Left ventricle myocardium superior (tissue), 1 donor: ENCODE measurements at regions of chr1 and their contacts with region 1.

Region 1: DNA sequence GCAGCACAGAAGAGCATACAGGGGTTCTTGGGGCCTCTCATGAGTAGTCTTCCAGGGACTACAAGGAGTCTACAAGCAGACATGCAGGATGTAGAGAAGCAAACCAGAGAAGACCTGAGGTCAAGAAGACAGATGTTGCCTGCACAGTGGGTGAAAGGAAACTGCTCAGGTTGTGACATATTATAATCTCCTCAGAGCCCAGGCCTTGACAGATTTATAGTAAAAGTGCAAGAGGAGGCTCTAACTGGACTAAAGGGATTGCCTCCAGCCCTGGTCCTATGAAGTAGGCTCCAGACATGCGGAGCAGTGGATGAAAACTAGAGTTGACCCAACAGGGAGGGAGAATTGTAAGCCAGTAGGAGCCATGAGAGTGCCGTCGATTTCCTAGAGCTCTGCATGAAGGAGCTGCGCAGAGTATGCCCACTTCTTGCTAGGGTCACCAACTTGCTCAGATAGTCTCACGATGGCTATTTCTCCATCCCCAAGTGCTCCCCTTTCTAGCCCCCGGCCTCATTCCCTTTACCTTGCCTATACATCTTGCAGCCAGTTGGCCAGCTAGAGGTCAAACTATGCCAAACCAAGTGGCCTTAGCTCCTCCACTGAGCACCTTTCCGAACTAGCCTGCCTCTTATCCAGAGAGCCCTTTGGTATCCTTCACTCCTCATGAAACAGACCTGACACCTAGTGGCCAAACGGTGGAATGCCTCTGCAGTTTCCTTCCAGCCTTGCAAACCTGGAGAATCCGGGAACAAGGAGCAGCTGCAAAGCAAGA is 36.2 kb upstream of the IPO9 start:
- DNase-seq: peak; percentile 71
- ATAC-seq: peak; percentile 79

Region 2: GRCh38 chr1:200938955-200939354 is 853.8 kb before region 1 on chr1:
- intact Hi-C with region 1: no loop called
- DNase-seq: no peak
- ATAC-seq: no peak

Region 3: GRCh38 chr1:201559679-201560162 is 233.0 kb before region 1 on chr1:
- intact Hi-C with region 1: loop called (anchors 10 kb)
- DNase-seq: peak; percentile 87
- ATAC-seq: peak; percentile 82

Region 4: GRCh38 chr1:201709564-201710295 is 83.0 kb before region 1 on chr1:
- intact Hi-C with region 1: loop called (anchors 2 kb)
- DNase-seq: peak; percentile 87
- ATAC-seq: peak; percentile 54

Region 5: DNA sequence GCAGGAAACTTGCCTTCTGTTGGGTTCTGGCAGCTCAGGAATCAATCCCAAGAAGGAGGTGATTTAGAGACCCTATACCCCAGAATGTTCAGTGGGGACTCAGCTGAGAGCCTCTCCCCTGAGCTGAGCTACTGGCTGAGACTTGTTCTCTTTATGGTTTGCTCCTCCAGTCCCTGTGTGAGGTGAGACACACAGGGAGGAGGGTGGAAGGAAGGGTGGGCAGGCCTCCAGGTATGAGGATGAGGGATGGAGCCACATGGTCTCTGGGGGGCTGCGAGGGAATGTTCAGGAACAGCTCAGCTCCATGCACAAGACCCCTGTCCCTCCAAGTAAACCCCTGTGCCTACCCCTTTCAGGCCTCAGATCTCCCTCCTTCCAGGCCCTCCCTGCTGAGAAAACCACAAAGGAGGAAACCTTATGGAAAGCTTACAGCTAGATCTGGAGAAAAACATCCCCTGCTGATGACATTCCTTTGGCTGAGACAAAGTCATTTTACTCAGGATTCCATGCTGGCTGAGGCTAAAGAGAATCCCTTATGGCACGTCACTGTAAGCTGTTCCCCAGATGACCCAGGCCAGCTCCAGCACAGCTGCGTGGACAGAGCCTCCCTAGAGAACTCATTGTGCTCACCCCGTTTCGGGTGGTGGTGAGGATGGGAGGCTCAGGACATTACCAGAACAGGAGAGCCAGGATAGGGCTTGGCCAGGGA is 55.2 kb before region 1 on chr1:
- intact Hi-C with region 1: no loop called
- DNase-seq: peak; percentile 83
- ATAC-seq: peak; percentile 75